AG04450 (cell line): ENCODE measurements at regions of chr14 and their contacts with region 1.

Region 1: DNA sequence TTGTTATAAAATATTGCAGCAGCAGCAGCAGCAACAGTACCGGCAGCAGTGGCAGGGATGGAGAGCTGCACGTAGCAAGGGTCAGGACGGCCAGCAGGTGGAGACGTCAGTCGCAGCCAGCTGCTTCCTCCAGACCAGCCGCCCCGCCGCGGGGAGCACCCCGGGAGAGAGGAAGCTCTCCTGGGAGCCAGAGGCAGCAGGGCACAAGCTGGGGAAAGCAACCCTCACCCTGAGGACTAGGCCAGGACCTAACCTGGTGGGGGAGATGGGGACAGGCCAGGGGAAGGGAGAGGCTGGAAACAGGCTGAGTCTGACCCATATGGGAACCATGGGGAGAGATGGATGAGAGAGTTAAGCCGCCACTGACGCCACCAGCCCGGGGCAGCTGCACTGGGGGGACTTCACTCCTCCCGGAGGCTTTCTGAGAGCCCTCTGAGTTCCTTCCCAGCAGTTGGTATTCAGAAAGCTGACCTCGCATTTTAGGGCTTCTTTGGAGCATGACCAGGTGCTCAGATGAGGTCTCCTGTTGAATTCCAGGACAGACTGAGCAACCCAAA is 56.3 kb downstream of the SPTB start:
- DNase-seq: no peak
- H3K4me3 ChIP-seq: no peak overlapping the region
- H3K27ac ChIP-seq: no peak overlapping the region
- H3K27me3 ChIP-seq: peaks cover 35% of the 10 kb centered on the region
- CTCF ChIP-seq: peak; percentile 84

Region 2: DNA sequence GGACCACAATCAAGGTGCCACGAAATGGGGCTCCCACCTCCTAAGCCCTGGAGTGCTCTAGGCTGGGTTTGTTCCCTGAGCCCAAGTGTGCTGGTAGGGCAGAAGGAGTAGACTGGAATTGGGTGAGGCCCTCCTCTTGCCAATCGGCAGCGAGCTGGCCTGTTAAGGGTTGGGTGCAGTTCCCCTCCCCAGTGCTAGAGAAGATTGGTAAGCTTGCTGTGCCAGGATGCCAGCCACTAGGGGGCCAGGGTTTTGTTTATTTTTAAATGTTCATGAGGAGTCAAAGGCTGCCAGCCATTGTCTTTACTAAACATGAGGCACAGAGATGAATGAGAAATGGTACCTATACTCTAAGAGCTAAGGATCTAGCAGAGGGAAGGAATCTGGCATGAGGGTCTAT is 23.4 kb before region 1 on chr14:
- CTCF ChIA-PET with region 1: interaction called, 15 read pairs
- POLR2A ChIA-PET with region 1: no interaction called
- DNase-seq: no peak
- H3K4me3 ChIP-seq: no peak overlapping the region
- H3K27ac ChIP-seq: no peak overlapping the region
- H3K27me3 ChIP-seq: peaks cover 16% of the 10 kb centered on the region
- CTCF ChIP-seq: peak; percentile 48

Region 3: GRCh38 chr14:64835431-64835830 is 12.0 kb after region 1 on chr14:
- CTCF ChIA-PET with region 1: interaction called, 29 read pairs
- POLR2A ChIA-PET with region 1: no interaction called
- DNase-seq: no peak
- H3K4me3 ChIP-seq: no peak overlapping the region
- H3K27ac ChIP-seq: no peak overlapping the region
- H3K27me3 ChIP-seq: peaks cover 33% of the 10 kb centered on the region
- CTCF ChIP-seq: no peak

Region 4: GRCh38 chr14:64848239-64848638 is 24.9 kb after region 1 on chr14:
- CTCF ChIA-PET with region 1: interaction called, 10 read pairs
- POLR2A ChIA-PET with region 1: no interaction called
- DNase-seq: no peak
- H3K4me3 ChIP-seq: no peak overlapping the region
- H3K27ac ChIP-seq: no peak overlapping the region
- H3K27me3 ChIP-seq: peaks cover 53% of the 10 kb centered on the region
- CTCF ChIP-seq: no peak

Region 5: GRCh38 chr14:64910847-64911495 is 87.6 kb after region 1 on chr14:
- CTCF ChIA-PET with region 1: interaction called, 19 read pairs
- POLR2A ChIA-PET with region 1: interaction called, 4 read pairs
- DNase-seq: peak; percentile 13
- H3K4me3 ChIP-seq: no peak overlapping the region
- H3K27ac ChIP-seq: no peak overlapping the region
- H3K27me3 ChIP-seq: peaks cover 11% of the 10 kb centered on the region
- CTCF ChIP-seq: peak; percentile 84